H1 (cell line): ENCODE measurements at regions of chr12 and their contacts with region 1.

Region 1: DNA sequence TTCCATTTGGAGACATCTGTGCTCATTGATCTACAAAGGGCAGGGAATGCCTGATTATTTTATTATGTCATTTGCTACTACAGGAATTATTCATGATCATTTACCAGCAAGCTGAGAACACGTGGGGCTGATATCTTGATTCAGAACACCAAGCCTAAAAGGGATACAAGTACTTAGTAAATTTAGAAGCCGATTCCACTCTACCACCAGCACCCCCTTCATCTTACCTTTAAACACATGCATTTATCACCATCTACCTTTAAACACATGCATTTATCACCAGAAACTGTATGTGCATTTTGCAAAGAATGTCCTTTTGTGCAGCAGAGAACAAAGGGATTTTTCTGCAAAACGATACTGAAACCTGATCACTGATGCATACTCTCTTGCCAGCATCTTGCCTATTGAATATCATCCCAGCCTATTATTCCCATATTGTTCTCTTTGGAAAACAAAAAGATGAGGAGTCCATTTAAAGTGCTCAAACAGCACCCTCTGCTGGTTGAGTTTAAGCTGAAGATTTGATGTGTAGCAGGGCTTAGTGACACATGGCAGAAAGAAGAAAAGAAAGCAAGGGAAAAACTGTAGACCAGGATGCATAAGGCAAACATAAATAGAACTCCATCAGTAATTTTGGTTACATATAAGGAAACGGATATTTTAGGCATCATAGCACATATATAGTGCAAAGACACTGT is 132.6 kb upstream of the PLEKHG7 start:
- DNase-seq: peak in 1 of 2 experiments; percentile 63
- H3K4me3 ChIP-seq: no peak overlapping the region
- H3K27ac ChIP-seq: no peak overlapping the region
- H3K4me1 ChIP-seq: peaks cover 0 to 4% (median under 1%) of the 10 kb centered on the region in 4 experiments; a peak in 2 of 7 replicates
- H3K27me3 ChIP-seq: no peaks in the 10 kb centered on the region
- CTCF ChIP-seq: peak in 2 of 3 experiments; percentile 50 to 70; a peak in 3 of 4 replicates
- EP300 ChIP-seq: no peak
- POLR2A ChIP-seq: no peak
- RAD21 ChIP-seq: peak; percentile 85 to 90

Region 2: DNA sequence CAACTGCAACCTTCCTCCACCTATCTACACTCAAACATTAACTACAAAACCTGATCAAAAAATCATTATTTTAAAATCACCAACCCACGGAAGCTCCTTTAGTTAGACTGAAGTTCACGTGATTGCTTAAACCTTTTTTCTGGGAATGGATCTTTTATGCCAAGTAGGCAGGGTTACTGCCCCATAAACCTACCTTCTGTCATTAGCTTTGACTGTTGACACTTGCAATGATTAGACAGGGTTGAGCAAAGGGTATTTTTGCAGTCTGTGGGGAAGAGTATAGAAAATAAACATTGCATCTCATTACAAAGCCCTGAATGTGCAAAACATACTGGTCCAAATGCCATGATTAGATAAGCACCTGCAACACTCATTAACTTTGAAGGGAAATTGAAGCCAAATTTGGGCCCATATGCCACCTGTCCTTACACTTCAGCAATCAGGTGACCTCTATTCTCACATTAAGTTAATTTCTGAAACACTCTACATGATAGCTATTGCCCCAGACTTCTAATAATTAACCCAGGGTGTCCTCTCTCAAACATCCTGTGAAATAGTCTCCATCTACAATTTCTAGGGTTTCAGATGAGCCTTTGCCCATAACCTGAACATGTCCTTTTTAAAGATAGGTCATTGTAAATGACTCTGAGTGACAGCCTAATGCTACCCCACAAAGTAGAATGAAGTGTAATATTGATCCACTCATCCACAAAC is 23.4 kb before region 1 on chr12:
- CTCF ChIA-PET with region 1: no interaction called
- POLR2A ChIA-PET with region 1: no interaction called
- DNase-seq: no peak
- H3K4me3 ChIP-seq: no peak overlapping the region
- H3K27ac ChIP-seq: no peak overlapping the region
- H3K4me1 ChIP-seq: no peaks in the 10 kb centered on the region
- H3K27me3 ChIP-seq: no peaks in the 10 kb centered on the region
- CTCF ChIP-seq: no peak
- EP300 ChIP-seq: no peak
- POLR2A ChIP-seq: no peak
- RAD21 ChIP-seq: no peak

Region 3: DNA sequence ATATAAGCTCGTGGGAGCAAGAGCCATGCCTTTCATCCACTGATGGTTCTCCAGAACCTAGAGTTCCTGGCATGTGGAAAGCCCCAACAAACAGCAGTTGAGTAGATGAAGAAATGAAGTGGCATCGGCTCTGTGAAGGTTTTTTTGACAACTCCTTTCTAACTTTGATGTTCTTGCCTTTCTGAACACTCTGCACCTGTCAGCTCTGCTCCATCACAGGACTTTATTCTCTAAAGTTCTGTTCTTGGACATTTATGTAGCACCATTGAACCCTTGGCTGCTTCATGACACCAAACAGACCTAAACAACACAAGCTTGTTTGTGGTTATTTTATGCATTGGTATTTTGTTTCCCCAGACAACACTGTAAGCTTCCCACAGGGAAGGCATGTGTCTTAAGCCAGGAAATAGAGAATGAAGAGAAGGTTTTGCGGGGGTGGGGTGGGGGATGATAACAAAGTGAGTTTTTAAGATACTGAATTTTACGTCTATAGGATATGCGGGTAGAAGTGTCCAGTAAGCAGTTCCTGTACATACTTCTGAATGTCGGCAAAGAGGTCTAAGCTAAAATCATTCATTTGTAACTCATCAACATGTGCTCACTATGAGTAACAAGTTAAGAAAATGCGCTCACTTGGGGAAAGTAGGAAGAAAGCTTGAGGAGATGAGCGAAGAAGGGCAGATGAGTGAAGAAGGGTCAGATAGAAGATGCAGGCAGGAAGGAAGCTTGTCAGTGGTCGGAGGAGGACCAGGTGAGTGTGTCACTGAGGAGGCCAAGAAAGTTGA is 13.4 kb before region 1 on chr12:
- CTCF ChIA-PET with region 1: interaction called, 11 read pairs
- POLR2A ChIA-PET with region 1: no interaction called
- DNase-seq: no peak
- H3K4me3 ChIP-seq: no peak overlapping the region
- H3K27ac ChIP-seq: no peak overlapping the region
- H3K4me1 ChIP-seq: peaks cover 0 to 5% (median 0%) of the 10 kb centered on the region in 4 experiments; a peak in 1 of 7 replicates
- H3K27me3 ChIP-seq: no peaks in the 10 kb centered on the region
- CTCF ChIP-seq: no peak
- EP300 ChIP-seq: no peak
- POLR2A ChIP-seq: no peak
- RAD21 ChIP-seq: no peak

Region 4: DNA sequence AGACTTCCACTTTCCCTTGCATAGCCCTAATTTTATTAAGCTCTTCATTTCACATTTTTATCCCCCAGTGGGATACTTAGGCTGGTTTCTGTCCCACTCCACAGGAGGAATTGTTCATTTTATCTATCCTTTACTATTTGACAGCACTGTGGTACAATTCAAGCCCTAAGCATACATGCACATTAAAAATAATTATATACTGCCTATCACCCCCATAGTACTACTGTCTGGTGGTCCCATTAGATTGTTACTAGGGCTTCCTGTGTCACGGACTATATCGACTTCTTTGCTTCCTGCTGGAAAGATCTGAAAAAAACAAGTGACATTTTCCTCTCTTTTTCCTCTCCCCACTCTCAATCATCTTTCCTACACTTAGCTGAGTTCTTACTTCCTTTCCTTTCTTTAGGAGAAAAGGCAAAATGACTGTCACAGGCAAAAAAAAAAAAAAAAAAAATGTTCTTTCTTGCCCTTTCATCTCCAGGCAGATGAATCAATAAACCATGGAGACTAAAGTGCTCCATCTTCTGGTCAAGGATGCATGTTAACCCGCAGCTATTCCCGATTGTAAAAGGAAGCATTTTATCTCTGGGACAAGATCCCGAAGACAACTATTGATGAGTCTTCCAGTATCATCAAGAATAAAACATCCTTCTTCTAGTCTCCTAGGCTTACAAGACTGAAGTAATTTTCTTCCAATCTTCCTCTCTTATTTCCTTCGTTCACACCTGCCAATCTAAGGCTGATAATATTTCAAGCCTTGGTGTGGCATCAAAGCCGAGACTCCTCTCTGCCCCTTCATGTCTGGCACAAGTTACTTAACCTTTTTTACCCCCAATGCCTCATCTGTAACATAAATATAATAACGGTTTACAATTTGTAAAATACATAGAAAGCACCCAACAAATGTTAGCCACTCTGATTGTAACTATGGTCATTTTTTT is 38.2 kb after region 1 on chr12:
- CTCF ChIA-PET with region 1: interaction called, 12 read pairs
- POLR2A ChIA-PET with region 1: no interaction called
- DNase-seq: no peak
- H3K4me3 ChIP-seq: no peak overlapping the region
- H3K27ac ChIP-seq: no peak overlapping the region
- H3K4me1 ChIP-seq: peaks cover 2 to 10% (median 4%) of the 10 kb centered on the region in 4 experiments; a peak in 3 of 7 replicates
- H3K27me3 ChIP-seq: no peaks in the 10 kb centered on the region
- CTCF ChIP-seq: peak in 2 of 3 experiments; percentile 43 to 62; a peak in 2 of 4 replicates
- EP300 ChIP-seq: no peak
- POLR2A ChIP-seq: no peak
- RAD21 ChIP-seq: peak; percentile 60 to 69

Region 5: DNA sequence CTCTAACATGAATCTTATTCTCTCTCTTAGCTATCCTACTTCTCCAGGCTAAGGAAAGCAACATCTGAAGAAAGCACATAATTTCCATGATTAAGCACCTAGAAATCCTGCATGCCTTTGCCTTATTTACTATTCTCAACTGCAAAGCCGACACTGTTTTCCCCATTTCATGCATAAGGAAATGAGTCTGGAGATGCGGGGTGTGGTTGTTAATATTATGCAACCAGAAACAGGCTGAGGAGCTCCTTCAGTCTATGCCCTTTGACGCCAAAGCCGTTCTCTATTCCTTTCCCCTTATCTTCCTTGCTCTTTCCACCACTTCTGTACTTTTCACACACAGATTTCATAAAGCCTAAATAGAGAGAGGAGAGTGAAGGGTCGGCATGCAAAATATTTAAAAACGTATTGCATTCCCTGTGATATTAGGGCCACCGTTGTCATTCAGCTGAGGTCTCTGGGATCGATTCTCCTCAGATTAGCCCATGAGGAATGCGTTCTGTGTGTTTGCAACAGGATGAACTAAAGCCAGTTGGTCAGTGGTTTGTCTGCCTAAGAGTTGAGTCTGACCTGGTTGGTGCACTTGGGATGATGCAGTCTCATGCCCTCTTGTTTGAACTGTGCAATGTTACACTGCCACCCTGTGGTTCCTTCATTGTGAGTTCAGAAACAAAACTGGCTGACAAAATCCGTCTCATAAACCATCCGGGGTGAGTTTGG is 79.5 kb after region 1 on chr12:
- CTCF ChIA-PET with region 1: interaction called, 10 read pairs
- POLR2A ChIA-PET with region 1: no interaction called
- DNase-seq: peak; percentile 33 to 51
- H3K4me3 ChIP-seq: no peak overlapping the region
- H3K27ac ChIP-seq: no peak overlapping the region
- H3K4me1 ChIP-seq: peaks cover 2 to 8% (median 4%) of the 10 kb centered on the region in 4 experiments; a peak in 6 of 7 replicates
- H3K27me3 ChIP-seq: no peaks in the 10 kb centered on the region
- CTCF ChIP-seq: peak; percentile 14 to 78 (median 70)
- EP300 ChIP-seq: no peak
- POLR2A ChIP-seq: no peak
- RAD21 ChIP-seq: peak; percentile 90 to 94